ENCODE measurements at regions of chr5 and their contacts with region 1.

Region 1: GRCh38 chr5:123273984-123274383 is 149.2 kb downstream of the CEP120 start:
- DNase-seq: no peak
- ATAC-seq: no peak
- H3K4me3 ChIP-seq: no peak overlapping the region
- H3K27ac ChIP-seq: no peak overlapping the region
- H3K4me1 ChIP-seq: no peaks in the 10 kb centered on the region
- H3K27me3 ChIP-seq: peaks cover 0 to 8% (median 0%) of the 10 kb centered on the region in 7 donors
- CTCF ChIP-seq: peak in 1 of 9 donors; percentile 52

Region 2: DNA sequence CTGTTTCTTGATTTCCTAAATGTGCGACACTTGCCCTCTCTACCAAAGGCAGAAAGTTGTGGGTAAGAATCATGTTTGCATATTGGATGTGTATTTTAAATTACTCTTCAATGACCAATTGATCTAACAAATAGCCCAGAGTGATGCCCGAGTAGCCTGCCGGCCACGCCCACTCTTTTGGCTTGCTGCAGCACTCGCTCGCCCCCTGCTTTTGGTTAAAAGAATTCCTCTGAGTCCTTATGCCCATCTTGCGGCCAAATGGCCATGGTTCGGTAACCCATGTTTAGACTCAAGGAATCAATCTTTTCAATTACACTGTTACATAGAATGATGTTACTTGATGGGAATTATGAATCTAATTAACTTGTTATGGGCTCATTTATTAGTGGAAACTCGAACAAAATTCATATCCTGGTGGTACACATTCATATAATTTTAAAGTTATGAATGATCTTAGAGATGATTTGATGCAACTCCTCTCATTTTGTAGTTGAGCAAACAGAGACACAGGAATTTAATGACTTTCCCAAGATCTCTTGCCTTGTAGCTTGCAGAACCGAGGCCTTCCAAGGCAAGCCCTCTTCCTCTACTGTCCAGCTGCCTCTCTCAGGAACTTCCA is 273.9 kb before region 1 on chr5:
- intact Hi-C with region 1: no loop called
- DNase-seq: peak; percentile 6 to 18
- ATAC-seq: no peak
- H3K4me3 ChIP-seq: no peak overlapping the region
- H3K27ac ChIP-seq: no peak overlapping the region
- H3K4me1 ChIP-seq: no peaks in the 10 kb centered on the region
- H3K27me3 ChIP-seq: no peaks in the 10 kb centered on the region
- CTCF ChIP-seq: peak in 6 of 9 donors; percentile 9 to 52 (median 36)

Region 3: DNA sequence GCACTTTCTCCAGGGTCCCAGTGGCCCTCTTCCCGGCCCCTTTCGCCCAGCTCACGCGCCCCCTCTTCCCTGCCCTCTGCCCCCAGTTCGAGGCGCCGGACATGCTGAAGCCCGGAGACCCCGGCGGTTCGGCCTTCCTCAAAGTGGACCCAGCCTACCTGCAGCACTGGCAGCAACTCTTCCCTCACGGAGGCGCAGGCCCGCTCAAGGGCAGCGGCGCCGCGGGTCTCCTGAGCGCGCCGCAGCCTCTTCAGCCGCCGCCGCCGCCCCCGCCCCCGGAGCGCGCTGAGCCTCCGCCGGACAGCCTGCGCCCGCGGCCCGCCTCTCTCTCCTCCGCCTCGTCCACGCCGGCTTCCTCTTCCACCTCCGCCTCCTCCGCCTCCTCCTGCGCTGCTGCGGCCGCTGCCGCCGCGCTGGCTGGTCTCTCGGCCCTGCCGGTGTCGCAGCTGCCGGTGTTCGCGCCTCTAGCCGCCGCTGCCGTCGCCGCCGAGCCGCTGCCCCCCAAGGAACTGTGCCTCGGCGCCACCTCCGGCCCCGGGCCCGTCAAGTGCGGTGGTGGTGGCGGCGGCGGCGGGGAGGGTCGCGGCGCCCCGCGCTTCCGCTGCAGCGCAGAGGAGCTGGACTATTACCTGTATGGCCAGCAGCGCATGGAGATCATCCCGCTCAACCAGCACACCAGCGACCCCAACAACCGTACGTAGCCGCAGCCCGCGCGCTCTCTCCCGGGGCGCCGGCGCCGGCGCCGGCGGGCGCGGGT is 183.9 kb before region 1 on chr5:
- intact Hi-C with region 1: loop called in 1 of 10 experiments (anchors 5 kb)
- DNase-seq: peak in 1 of 2 donors; percentile 19
- ATAC-seq: peak in 7 of 8 donors; percentile 18 to 68 (median 48)
- H3K4me3 ChIP-seq: peak overlapping the region; percentile 27 to 64 (median 56)
- H3K27ac ChIP-seq: no peak overlapping the region
- H3K4me1 ChIP-seq: peaks cover 0 to 46% (median 32%) of the 10 kb centered on the region in 9 donors
- H3K27me3 ChIP-seq: peaks cover 30 to 97% (median 93%) of the 10 kb centered on the region in 7 donors
- CTCF ChIP-seq: no peak

Region 4: DNA sequence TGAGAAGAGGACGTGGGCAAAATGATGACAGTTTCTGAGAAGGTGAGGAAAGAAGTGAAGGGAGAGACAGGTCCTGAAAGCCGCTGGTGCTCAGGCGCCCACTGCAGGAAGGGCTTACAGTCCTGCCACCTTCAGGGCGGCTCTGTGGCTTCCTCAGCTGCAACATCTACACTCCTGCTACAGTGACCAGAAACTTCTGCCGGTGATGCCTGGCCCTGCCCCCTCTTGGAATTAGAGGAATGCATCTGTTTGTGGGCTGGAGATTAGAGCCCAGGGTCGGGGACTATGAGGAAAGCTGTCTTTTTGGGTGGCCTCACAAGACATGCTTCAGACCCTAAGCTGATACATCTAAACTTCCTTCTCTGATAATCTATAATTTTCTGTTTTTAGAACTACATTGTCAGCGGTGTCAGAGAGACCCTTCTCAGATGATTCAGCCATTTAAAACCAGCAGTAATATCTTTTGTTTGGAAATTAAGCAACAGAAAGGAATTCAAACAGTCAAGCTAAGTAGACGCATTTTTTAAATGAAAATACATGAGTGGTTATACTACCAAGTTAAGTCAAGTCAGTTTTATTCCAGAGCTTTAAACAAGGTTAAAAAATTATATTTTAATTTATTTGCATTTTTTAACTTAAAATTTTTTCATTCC is 154.5 kb before region 1 on chr5:
- intact Hi-C with region 1: loop called in 1 of 10 experiments (anchors 10 kb)
- DNase-seq: no peak
- ATAC-seq: no peak
- H3K4me3 ChIP-seq: no peak overlapping the region
- H3K27ac ChIP-seq: no peak overlapping the region
- H3K4me1 ChIP-seq: peaks cover 0 to 5% (median 0%) of the 10 kb centered on the region in 9 donors
- H3K27me3 ChIP-seq: peaks cover 0 to 6% (median 0%) of the 10 kb centered on the region in 7 donors
- CTCF ChIP-seq: no peak

Region 5: GRCh38 chr5:123244458-123244857 is 29.5 kb before region 1 on chr5:
- intact Hi-C with region 1: no loop called
- DNase-seq: no peak
- ATAC-seq: no peak
- H3K4me3 ChIP-seq: no peak overlapping the region
- H3K27ac ChIP-seq: no peak overlapping the region
- H3K4me1 ChIP-seq: no peaks in the 10 kb centered on the region
- H3K27me3 ChIP-seq: no peaks in the 10 kb centered on the region
- CTCF ChIP-seq: no peak

Region 6: DNA sequence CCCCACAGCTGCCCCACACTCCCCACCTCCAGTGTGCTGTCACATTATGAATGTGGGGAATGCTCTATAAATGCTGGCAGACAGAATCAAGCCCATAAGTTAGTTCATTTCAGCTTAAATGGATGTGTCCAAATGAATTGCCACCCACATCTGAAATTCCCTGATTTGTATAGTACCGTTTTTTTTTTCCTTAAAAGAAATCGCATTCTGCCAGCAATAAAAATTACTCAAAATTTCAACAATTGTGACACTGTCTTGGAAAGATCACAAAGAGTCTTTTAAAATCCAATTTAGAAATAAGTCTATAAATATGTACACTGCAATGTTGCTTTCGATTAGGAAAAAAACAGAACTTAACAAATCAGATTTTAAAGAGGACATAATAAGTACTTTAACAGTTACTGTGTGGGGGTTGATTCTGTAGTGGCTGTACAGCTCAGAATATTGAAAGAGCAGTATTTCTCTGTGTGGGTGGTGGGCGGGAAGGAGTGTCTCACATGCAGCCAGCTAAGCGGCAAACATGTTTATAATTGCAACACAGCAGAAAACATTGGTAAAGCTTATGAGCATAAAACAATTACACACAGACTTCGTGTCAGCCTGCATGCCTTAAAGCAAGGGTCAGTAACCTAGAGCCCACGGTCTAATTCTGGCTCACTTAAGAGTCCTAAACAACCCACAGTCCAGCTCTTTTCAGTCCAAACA is 213.1 kb after region 1 on chr5:
- intact Hi-C with region 1: no loop called
- DNase-seq: no peak
- ATAC-seq: peak in 2 of 8 donors; percentile 46 to 55
- H3K4me3 ChIP-seq: peak overlapping the region in 1 of 10 donors; percentile 1
- H3K27ac ChIP-seq: no peak overlapping the region
- H3K4me1 ChIP-seq: no peaks in the 10 kb centered on the region
- H3K27me3 ChIP-seq: no peaks in the 10 kb centered on the region
- CTCF ChIP-seq: no peak